ENCODE measurements at regions of chr2 and their contacts with region 1.

Region 1: GRCh38 chr2:75627895-75628504 is 18.6 kb upstream of the MRPL19 start:
- DNase-seq: peak; percentile 79
- H3K4me3 Mint-ChIP-seq: no peak overlapping the region
- H3K27ac Mint-ChIP-seq: no peak overlapping the region
- H3K4me1 Mint-ChIP-seq: peaks cover 7% of the 10 kb centered on the region
- H3K27me3 Mint-ChIP-seq: no peaks in the 10 kb centered on the region
- CTCF ChIP-seq: peak; percentile 90

Region 2: DNA sequence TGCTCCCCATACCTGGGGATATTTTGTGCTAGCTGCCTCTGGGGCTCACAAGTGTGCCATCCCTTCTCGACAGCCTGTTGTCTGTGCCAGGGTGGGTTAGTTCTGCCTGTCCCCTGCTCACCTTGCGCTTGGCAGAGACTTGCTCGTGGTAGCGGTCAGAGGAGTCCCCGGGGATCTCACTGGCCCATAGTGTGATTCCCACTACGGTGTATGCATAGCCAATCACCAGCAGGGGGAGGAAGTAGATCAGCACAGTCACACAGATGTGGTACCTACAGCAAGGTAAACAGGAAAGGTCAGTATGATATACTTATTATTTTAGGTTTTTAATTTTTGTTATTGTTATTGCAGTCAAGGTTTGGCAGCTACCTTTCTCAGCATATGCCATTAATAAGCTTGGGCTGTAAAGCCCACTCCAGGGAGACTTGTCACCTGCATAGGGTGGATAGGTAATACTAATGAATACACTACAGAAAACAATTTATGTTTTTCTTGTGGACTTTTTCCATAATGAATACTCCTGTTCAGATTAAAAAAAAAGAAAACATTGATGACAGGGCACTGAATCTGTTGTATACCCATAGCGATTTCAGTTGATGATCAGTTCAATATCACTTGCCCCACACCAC is 574.4 kb before region 1 on chr2:
- CTCF ChIA-PET with region 1: interaction called, 4 read pairs
- POLR2A ChIA-PET with region 1: no interaction called
- intact Hi-C with region 1: loop called (anchors 5 kb)
- DNase-seq: peak; percentile 62
- H3K4me3 Mint-ChIP-seq: no peak overlapping the region
- H3K27ac Mint-ChIP-seq: no peak overlapping the region
- H3K4me1 Mint-ChIP-seq: no peaks in the 10 kb centered on the region
- H3K27me3 Mint-ChIP-seq: no peaks in the 10 kb centered on the region
- CTCF ChIP-seq: peak; percentile 78

Region 3: DNA sequence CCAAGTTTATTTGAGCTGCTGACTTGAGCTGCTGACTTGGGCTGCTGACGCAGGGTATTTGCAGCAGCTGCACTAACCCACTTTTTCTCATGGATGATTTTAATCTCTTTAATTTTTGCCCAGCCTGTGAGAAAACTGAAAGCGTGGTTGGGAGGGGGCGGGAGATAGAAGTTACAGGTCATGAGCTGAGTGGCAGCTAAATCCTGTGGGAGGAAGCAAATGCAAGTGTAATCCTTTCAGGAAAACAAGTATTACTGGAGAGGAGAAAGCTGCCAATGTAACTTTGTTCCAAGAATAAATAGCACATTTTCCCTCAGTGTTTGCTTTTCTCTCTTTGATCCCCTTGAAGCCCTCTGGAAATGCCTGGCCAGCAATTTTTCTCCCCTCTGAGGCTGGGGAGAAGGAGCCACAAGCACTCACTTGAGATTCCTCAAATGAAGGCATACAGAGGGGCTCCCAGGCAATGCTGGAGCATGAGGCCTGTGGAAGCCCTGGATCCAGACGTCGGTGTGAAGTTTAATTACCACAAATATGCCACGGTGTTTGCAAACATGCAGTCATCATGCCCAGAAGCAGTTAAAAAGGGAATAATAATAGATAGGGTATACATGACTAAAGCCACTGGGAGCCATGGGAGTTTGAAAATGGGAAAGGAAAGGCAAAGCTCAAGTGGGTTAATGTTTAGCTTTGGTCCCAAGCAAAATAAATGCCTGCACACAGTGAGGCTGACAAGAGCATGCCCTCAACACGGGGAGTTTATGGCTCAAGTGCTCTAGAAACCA is 56.9 kb before region 1 on chr2:
- CTCF ChIA-PET with region 1: interaction called, 11 read pairs
- POLR2A ChIA-PET with region 1: no interaction called
- intact Hi-C with region 1: no loop called
- DNase-seq: no peak
- H3K4me3 Mint-ChIP-seq: no peak overlapping the region
- H3K27ac Mint-ChIP-seq: no peak overlapping the region
- H3K4me1 Mint-ChIP-seq: peaks cover 21% of the 10 kb centered on the region
- H3K27me3 Mint-ChIP-seq: no peaks in the 10 kb centered on the region
- CTCF ChIP-seq: no peak

Region 4: DNA sequence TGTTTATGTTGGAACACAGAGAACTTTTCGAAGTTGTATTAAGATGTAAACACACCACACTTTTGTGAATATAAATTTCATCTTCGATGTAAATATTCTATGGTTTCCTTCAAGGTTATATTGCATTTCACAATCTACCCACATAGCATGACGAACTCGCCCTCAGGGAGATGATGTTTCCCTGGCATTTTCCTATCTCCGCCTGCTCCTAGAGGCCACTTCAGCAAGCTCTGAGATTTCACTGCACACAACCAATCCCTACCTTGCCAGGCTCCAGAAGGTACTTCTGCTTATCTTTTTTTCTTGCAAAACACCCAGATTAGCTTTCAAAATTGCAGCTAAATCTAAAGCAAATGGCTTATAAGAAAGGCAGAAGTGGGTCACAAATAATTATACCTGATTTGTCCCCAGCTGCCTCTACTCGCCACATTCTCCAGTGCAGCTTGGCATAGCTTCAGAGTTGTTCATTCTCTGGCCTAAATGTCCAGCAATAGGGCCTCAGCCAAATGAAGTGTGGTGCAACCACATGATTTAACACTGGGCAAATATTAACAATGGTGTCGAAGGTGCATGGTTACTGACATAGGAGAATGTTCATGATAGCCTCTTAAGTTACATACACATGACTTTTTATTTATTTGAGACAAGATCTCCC is 13.8 kb before region 1 on chr2:
- CTCF ChIA-PET with region 1: interaction called, 62 read pairs
- POLR2A ChIA-PET with region 1: interaction called, 4 read pairs
- intact Hi-C with region 1: loop called (anchors 2 kb)
- DNase-seq: peak; percentile 88
- H3K4me3 Mint-ChIP-seq: peak overlapping the region; percentile 0
- H3K27ac Mint-ChIP-seq: peak overlapping the region; percentile 55
- H3K4me1 Mint-ChIP-seq: peaks cover 17% of the 10 kb centered on the region
- H3K27me3 Mint-ChIP-seq: no peaks in the 10 kb centered on the region
- CTCF ChIP-seq: no peak

Region 5: DNA sequence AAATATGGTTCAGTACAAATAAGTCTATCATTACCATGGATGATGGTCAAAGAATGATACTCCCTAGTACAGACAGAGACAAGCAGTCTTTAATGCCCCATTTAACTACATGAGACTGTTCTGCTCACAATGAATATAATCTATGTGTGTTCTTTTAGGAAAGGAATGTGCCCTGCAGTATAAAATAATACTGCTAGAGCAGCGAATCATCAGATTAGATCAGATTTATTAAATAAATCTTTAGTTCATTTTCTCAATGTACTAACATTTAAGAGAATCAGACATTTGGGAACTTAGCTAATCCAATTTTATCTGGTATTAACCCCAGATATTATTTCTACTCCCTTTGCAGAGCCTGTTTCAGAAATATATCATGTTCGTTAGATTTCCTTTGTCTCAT is 354.7 kb after region 1 on chr2:
- CTCF ChIA-PET with region 1: no interaction called
- POLR2A ChIA-PET with region 1: no interaction called
- intact Hi-C with region 1: no loop called
- DNase-seq: no peak
- H3K4me3 Mint-ChIP-seq: no peak overlapping the region
- H3K27ac Mint-ChIP-seq: no peak overlapping the region
- H3K4me1 Mint-ChIP-seq: no peaks in the 10 kb centered on the region
- H3K27me3 Mint-ChIP-seq: no peaks in the 10 kb centered on the region
- CTCF ChIP-seq: no peak